Breast epithelium (tissue), 4 donors: ENCODE measurements at regions of chr6 and their contacts with region 1.

Region 1: DNA sequence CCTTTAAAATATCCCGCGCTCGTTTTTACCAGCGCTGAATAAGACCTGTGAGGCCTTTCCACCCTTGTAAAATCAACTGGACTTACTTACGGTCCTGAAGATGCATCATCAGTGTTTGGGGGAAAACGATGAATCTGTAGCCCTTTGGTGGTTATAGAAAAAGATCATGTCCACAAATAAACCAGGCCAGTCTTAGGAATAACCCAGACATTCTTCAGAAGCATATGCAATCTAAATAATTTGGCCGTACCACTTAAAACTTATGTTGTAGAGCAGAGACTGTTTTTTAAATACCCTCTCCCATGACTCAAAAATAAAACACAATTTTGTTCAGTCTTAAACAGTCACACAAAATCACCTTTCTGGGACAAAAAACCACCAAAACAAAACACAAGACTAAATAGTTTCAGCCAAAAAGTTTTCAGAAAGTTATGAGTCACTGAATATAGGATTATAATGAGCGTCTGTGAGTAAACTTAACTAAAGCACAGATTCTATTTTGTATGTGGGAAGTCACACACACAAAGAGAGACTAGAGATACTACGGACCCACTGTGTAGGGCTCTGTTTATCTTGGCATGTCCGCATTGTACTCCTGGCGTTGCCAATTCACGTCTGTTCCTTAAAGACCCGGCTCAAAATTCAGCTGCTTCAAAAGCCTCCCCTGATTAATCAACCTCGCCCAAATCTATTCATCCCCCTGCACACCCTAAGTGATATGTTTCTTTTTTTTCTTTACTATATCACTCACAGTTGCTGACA is 26.5 kb upstream of the SMOC2 start:
- DNase-seq: no peak
- H3K4me3 ChIP-seq: no peak overlapping the region
- H3K27ac ChIP-seq: peak overlapping the region; percentile 42 to 70
- H3K4me1 ChIP-seq: no peaks in the 10 kb centered on the region
- H3K27me3 ChIP-seq: no peaks in the 10 kb centered on the region
- CTCF ChIP-seq: no peak
- POLR2A ChIP-seq: no peak

Region 2: DNA sequence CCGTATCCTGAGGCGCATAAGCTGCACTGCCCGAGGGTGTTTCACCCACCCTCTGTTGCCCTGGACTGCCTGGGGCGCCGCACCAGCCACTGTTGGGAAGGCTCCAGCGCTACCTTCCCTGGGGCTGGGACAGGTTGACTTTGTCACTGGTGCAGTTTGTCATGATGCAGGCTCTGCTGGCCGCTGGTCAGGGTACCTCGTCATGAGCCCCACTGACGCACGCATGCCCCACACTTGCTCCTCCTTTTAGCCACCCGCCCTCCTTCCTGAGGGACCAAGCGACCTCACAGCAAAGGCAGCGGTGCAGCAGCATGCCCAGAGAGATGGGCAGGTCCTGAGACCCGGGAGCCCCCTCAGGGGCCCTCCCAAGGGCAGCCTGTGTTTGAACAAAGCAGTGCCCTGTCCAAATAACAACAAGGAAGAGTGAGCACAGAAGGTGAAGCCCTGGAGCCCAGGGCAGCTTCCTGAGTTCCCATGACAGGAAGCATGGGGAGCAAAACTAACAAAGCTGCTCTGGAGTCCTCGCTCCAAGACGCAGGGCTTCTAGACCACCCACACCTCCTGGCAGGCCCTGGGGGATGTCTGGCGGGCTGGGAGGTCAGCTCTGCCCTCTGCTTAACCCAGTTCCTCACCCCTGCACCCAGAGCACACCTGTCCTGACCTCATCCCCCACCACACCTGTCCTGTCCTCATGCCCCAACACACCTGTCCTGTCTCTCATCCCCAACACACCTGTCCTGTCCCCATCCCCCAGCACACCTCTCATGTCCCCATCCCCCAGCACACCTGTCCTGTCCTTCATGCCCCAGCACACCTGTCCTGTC is 23.6 kb before region 1 on chr6:
- intact Hi-C with region 1: loop called (anchors 1 kb)
- DNase-seq: peak; percentile 65 to 91
- H3K4me3 ChIP-seq: no peak overlapping the region
- H3K27ac ChIP-seq: peak overlapping the region; percentile 69 to 86
- H3K4me1 ChIP-seq: peaks cover 4 to 5% of the 10 kb centered on the region in 2 donors
- H3K27me3 ChIP-seq: no peaks in the 10 kb centered on the region
- CTCF ChIP-seq: no peak
- POLR2A ChIP-seq: no peak